Activated CD8-positive, alpha-beta T cell treated with anti-CD3 and anti-CD28 coated beads for 36 hours (primary cell): ENCODE measurements at regions of chr17 and their contacts with region 1.

Region 1: GRCh38 chr17:385926-386876 is 33.6 kb upstream of the RPH3AL start:
- DNase-seq: peak; percentile 67
- ATAC-seq: peak; percentile 74
- H3K4me3 Mint-ChIP-seq: peak overlapping the region; percentile 70
- H3K27ac Mint-ChIP-seq: no peak overlapping the region
- H3K4me1 Mint-ChIP-seq: peaks cover 9% of the 10 kb centered on the region
- H3K27me3 Mint-ChIP-seq: peaks cover 21% of the 10 kb centered on the region
- CTCF ChIP-seq: peak; percentile 52

Region 2: DNA sequence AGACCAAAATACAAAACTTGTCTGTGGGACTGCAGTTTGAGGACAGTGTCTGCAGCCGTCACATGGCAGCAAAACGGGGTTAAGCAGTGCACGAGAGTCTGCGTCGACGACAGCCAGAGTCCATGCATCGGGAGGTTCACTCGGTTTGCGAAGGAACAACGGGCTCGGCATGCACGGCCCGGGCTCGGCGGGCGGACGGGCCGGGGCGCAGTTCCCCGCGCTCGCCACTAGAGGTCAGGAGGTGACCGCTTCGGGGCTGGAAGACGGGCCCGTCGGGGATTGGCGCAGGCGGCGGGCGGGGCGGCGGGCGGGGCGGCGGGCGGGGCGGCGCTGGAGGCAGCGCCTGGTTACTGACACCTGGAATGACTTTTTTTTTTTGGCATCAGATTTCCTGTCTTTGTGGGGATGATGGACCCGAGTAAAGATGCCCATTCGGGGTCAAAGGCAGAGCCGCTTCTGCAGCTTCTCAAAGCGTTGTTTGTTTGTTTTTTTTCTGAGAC is 242.4 kb before region 1 on chr17:
- CTCF ChIA-PET with region 1: interaction called, 12 read pairs
- POLR2A ChIA-PET with region 1: no interaction called
- intact Hi-C with region 1: loop called (anchors 5 kb)
- DNase-seq: peak; percentile 80
- ATAC-seq: peak; percentile 95
- H3K4me3 Mint-ChIP-seq: no peak overlapping the region
- H3K27ac Mint-ChIP-seq: no peak overlapping the region
- H3K4me1 Mint-ChIP-seq: peaks cover 2% of the 10 kb centered on the region
- H3K27me3 Mint-ChIP-seq: peaks cover 4% of the 10 kb centered on the region
- CTCF ChIP-seq: peak; percentile 88

Region 3: DNA sequence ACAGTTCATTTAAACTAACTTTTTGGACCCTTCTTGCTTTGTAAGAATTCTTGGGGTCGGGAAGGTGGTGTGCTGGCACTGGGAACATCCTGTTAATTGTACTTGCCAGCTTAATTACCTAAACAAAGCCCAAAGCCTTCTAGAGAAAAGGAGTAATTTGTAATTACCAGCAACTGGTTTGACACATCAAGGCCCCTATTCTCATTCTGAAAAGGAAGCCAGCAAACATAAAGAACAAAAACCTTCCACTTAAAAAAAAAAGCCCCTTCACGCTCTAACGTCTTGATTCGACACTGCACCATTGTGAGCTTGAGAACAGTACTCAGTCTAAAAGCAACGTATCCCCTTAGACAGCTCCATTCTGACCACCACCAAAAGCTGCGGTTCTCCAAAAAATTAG is 41.1 kb after region 1 on chr17:
- CTCF ChIA-PET with region 1: no interaction called
- POLR2A ChIA-PET with region 1: no interaction called
- intact Hi-C with region 1: no loop called
- DNase-seq: no peak
- ATAC-seq: peak; percentile 60
- H3K4me3 Mint-ChIP-seq: no peak overlapping the region
- H3K27ac Mint-ChIP-seq: no peak overlapping the region
- H3K4me1 Mint-ChIP-seq: peaks cover 9% of the 10 kb centered on the region
- H3K27me3 Mint-ChIP-seq: no peaks in the 10 kb centered on the region
- CTCF ChIP-seq: no peak

Region 4: GRCh38 chr17:691423-691822 is 305.2 kb after region 1 on chr17:
- CTCF ChIA-PET with region 1: no interaction called
- POLR2A ChIA-PET with region 1: no interaction called
- intact Hi-C with region 1: no loop called
- DNase-seq: no peak
- ATAC-seq: no peak
- H3K4me3 Mint-ChIP-seq: no peak overlapping the region
- H3K27ac Mint-ChIP-seq: no peak overlapping the region
- H3K4me1 Mint-ChIP-seq: no peaks in the 10 kb centered on the region
- H3K27me3 Mint-ChIP-seq: no peaks in the 10 kb centered on the region
- CTCF ChIP-seq: no peak